Motor neuron (in vitro differentiated cells): ENCODE measurements at regions of chr12 and their contacts with region 1.

Region 1: GRCh38 chr12:10562306-10562933 is 51.0 kb downstream of the MAGOHB start:
- ATAC-seq: no peak
- H3K4me3 ChIP-seq: no peak overlapping the region
- H3K27ac ChIP-seq: no peak overlapping the region
- H3K4me1 ChIP-seq: no peaks in the 10 kb centered on the region

Region 2: GRCh38 chr12:10235761-10236631 is 326.4 kb before region 1 on chr12:
- in situ Hi-C with region 1: loop called in 6 of 9 experiments (anchors 10 to 25 kb)
- ATAC-seq: peak in 7 of 8 experiments; percentile 45 to 76 (median 57)
- H3K4me3 ChIP-seq: no peak overlapping the region
- H3K27ac ChIP-seq: no peak overlapping the region
- H3K4me1 ChIP-seq: no peaks in the 10 kb centered on the region

Region 3: GRCh38 chr12:10364815-10365622 is 197.4 kb before region 1 on chr12:
- in situ Hi-C with region 1: loop called in 1 of 9 experiments (anchors 25 kb)
- ATAC-seq: peak; percentile 41 to 69 (median 64)
- H3K4me3 ChIP-seq: peak overlapping the region; percentile 30 to 59 (median 42)
- H3K27ac ChIP-seq: peak overlapping the region; percentile 78 to 84
- H3K4me1 ChIP-seq: peaks cover 60 to 61% of the 10 kb centered on the region in 2 donors